Activated T-helper 1 cell treated with anti-CD3 and anti-CD28 coated beads, Interleukin-12 subunit alpha, Interleukin-12 subunit beta, Interleukin-2, Interleukin-4 antibody, amounts not matched to agents 30 ng/mL and 10 ng/mL and 1 ng/mL, durations not matched to agents 14 hours and 24 hours and 36 hours (primary cell): ENCODE measurements at regions of chr1 and their contacts with region 1.

Region 1: DNA sequence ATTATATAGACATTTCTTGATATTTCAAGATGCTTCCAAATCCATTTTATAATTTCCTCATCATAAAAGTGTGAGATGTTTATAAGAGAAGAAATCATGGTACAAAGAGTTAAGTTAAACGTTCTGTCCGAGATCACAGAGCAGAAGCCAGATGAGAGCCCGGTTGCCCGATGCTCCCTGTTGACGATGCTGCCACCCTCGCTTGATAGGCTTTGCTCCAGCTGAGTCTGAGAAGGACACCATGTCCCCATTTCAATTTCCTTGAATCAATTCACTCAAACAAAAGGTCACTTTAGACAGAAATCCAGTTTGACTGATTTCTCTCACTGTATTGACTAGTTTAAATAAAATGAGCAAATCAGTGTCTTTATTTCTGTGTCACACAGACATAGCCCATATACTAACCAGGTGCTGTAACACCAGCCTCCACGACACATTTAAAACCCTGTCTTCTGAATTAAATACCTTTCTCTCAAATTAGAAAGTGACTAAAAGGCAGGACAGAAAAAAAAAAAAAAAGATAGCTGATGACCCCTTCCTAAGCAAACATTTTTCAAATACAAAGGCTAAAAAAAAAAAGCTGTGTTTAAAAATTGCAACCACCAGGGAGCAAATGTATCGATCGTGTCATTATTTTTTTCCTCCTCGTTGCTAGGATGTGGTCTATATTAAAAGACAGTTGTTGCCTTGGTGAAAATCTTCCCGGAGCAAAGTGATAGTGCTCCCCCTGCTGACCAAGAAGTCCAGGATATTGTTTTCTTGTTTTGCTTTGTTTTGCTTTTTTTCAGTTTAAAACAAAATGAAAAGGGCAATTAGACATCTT is 35.2 kb downstream of the DNASE2B start:
- DNase-seq: peak; percentile 54
- H3K4me3 Mint-ChIP-seq: peak overlapping the region; percentile 41
- H3K27ac Mint-ChIP-seq: peak overlapping the region; percentile 9
- H3K4me1 Mint-ChIP-seq: peaks cover 11% of the 10 kb centered on the region
- H3K27me3 Mint-ChIP-seq: no peaks in the 10 kb centered on the region

Region 2: GRCh38 chr1:83931658-83932253 is 501.7 kb before region 1 on chr1:
- intact Hi-C with region 1: loop called (anchors 1 kb)
- DNase-seq: no peak
- H3K4me3 Mint-ChIP-seq: no peak overlapping the region
- H3K27ac Mint-ChIP-seq: no peak overlapping the region
- H3K4me1 Mint-ChIP-seq: no peaks in the 10 kb centered on the region
- H3K27me3 Mint-ChIP-seq: peaks cover 8% of the 10 kb centered on the region

Region 3: GRCh38 chr1:83998498-83999315 is 434.8 kb before region 1 on chr1 and contains the start of gene TTLL7:
- intact Hi-C with region 1: loop called (anchors 2 kb)
- DNase-seq: peak; percentile 62
- H3K4me3 Mint-ChIP-seq: peak within 1 kb of the TSS; percentile 89
- H3K27ac Mint-ChIP-seq: peak within 1 kb of the TSS; percentile 56
- H3K4me1 Mint-ChIP-seq: peaks cover 24% of the 10 kb centered on the region
- H3K27me3 Mint-ChIP-seq: peaks cover 60% of the 10 kb centered on the region
- total RNA-seq, gene TTLL7: 0.15 and 0.29 TPM in 2 replicates

Region 4: GRCh38 chr1:84298328-84298683 is 135.2 kb before region 1 on chr1:
- intact Hi-C with region 1: loop called (anchors 2 kb)
- DNase-seq: peak; percentile 46
- H3K4me3 Mint-ChIP-seq: peak overlapping the region; percentile 86
- H3K27ac Mint-ChIP-seq: peak overlapping the region; percentile 68
- H3K4me1 Mint-ChIP-seq: peaks cover 39% of the 10 kb centered on the region
- H3K27me3 Mint-ChIP-seq: peaks cover 5% of the 10 kb centered on the region

Region 5: GRCh38 chr1:84330125-84330984 is 103.1 kb before region 1 on chr1:
- intact Hi-C with region 1: no loop called
- DNase-seq: no peak
- H3K4me3 Mint-ChIP-seq: no peak overlapping the region
- H3K27ac Mint-ChIP-seq: no peak overlapping the region
- H3K4me1 Mint-ChIP-seq: no peaks in the 10 kb centered on the region
- H3K27me3 Mint-ChIP-seq: peaks cover 2% of the 10 kb centered on the region

Region 6: DNA sequence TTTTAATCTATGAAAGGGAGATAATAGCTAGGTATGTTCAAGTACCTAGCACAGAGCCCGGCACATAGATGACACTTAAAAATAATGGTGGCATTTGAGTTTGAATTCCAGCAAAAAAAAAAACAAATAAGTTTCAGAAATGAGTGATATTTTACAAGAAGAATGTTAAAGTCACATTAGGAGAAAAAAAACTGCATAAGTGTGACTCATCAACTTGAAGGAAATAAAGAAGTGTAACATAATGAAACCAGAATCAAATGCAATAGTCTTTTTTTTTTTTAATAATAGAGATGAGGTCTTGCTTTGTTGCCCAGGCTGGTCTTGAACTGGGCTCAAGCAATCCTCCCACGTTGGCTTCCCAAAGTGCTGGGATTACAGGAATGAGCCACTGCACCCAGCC is 18.1 kb before region 1 on chr1:
- intact Hi-C with region 1: no loop called
- DNase-seq: no peak
- H3K4me3 Mint-ChIP-seq: no peak overlapping the region
- H3K27ac Mint-ChIP-seq: no peak overlapping the region
- H3K4me1 Mint-ChIP-seq: no peaks in the 10 kb centered on the region
- H3K27me3 Mint-ChIP-seq: peaks cover 6% of the 10 kb centered on the region

Region 7: DNA sequence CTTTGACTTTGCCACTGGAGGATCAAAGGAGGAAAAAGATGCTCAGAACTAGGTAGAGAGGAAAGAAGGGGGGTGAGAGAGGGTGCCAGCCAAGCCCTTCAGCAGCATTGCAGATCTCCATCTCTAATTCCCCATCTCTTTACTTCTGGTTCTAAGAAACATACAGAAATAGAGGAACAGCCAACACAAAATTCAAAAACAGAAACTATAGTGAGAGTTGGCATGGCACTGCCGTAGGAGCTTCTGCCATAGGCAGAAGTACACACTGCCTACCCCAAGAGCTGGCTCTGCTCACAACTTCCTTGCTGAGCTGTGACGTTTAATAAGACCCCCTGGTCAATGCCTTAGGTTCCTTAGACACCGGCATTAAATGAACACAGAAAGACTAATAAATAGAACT is 19.0 kb after region 1 on chr1:
- intact Hi-C with region 1: no loop called
- DNase-seq: no peak
- H3K4me3 Mint-ChIP-seq: no peak overlapping the region
- H3K27ac Mint-ChIP-seq: no peak overlapping the region
- H3K4me1 Mint-ChIP-seq: no peaks in the 10 kb centered on the region
- H3K27me3 Mint-ChIP-seq: peaks cover 22% of the 10 kb centered on the region